SK-N-SH (cell line): ENCODE measurements at regions of chr3 and their contacts with region 1.

Region 1: DNA sequence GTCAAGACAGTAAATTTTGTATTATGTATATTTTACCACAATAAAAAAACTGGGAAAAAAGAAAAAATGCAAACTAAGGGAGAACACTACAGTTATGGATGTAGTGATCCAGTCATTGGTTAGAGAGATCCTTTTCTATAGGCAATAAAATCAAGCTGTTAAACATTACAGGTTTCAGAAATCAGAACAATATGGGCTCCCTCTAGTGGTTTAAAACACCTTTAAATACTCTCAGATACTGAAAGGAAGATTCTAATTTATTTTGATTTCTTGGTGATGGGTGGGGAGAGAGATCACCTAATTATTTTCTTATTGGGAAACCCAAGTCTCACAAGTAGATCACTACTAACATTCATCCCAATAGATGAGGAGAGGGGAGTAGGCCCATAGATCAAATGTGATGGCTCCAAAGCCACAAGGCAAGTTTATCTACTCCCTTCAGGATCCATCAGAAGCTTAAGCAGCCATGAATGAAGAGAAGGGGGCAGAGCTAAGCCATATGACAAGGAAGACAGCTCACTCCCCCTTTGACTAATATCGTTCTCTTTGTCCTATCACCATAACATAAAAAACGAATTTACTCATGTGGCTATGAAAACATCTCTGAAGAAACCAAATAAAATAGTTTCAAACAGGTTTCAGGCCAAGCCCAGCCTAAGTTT is 118.6 kb downstream of the ANO10 start:
- DNase-seq: peak; percentile 23
- H3K4me3 ChIP-seq: no peak overlapping the region
- H3K27ac ChIP-seq: no peak overlapping the region
- H3K4me1 ChIP-seq: no peaks in the 10 kb centered on the region; a peak in 1 of 4 replicates
- H3K27me3 ChIP-seq: no peaks in the 10 kb centered on the region
- CTCF ChIP-seq: peak; percentile 74
- EP300 ChIP-seq: no peak
- RAD21 ChIP-seq: peak; percentile 76

Region 2: GRCh38 chr3:43162230-43163084 is 340.7 kb before region 1 on chr3:
- CTCF ChIA-PET with region 1: interaction called, 55 read pairs
- POLR2A ChIA-PET with region 1: no interaction called
- DNase-seq: peak; percentile 47
- H3K4me3 ChIP-seq: no peak overlapping the region; a peak in 1 of 4 replicates
- H3K27ac ChIP-seq: no peak overlapping the region
- H3K4me1 ChIP-seq: peaks cover 0 to 6% of the 10 kb centered on the region in 2 experiments; a peak in 1 of 4 replicates
- H3K27me3 ChIP-seq: peaks cover 6% of the 10 kb centered on the region; the same call in 1 of the 2 replicates
- CTCF ChIP-seq: peak; percentile 46
- EP300 ChIP-seq: no peak
- RAD21 ChIP-seq: peak; percentile 88

Region 3: DNA sequence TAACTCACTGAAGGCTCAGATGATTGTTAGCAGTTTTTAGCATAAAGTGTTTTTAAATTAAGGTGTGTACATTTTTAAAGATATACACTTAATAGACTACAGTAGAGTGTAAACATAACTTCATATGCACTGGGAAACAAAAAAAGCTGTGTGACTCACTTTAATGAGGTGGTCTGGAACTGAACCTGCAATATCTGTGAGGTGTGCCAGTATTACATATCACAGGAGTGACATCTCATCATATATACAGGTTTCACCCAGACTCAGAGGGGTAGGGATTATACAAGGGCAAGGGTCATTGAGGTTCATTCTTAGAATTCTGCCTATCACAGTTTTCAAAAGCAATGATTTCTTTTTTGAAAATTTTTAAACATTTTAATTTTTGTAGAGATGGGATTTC is 224.1 kb before region 1 on chr3:
- CTCF ChIA-PET with region 1: no interaction called
- POLR2A ChIA-PET with region 1: no interaction called
- DNase-seq: no peak
- H3K4me3 ChIP-seq: no peak overlapping the region
- H3K27ac ChIP-seq: no peak overlapping the region
- H3K4me1 ChIP-seq: no peaks in the 10 kb centered on the region
- H3K27me3 ChIP-seq: peaks cover 19% of the 10 kb centered on the region; the same call in 1 of the 2 replicates
- CTCF ChIP-seq: no peak
- EP300 ChIP-seq: no peak
- RAD21 ChIP-seq: no peak

Region 4: DNA sequence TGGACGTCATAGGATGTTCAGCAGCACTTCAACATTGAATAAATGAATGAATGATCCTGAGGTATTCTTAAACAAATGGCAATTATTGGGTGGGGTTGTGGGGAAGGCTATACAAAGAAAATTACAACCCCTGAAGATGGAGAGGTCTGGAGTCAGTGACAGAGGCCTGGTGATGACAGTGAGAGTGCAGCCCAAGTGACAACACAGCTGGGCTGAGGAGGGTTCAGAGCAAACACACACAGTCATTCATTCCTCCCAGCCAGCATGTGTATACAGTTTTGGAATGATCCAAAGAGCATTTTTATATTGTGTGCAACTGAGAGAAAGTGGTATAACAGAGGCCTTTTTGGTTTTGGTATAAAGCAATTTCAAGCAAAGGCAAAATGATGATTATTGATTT is 29.5 kb before region 1 on chr3:
- CTCF ChIA-PET with region 1: interaction called, 11 read pairs
- POLR2A ChIA-PET with region 1: no interaction called
- DNase-seq: no peak
- H3K4me3 ChIP-seq: no peak overlapping the region
- H3K27ac ChIP-seq: no peak overlapping the region
- H3K4me1 ChIP-seq: no peaks in the 10 kb centered on the region; a peak in 1 of 4 replicates
- H3K27me3 ChIP-seq: no peaks in the 10 kb centered on the region
- CTCF ChIP-seq: no peak
- EP300 ChIP-seq: no peak
- RAD21 ChIP-seq: no peak

Region 5: DNA sequence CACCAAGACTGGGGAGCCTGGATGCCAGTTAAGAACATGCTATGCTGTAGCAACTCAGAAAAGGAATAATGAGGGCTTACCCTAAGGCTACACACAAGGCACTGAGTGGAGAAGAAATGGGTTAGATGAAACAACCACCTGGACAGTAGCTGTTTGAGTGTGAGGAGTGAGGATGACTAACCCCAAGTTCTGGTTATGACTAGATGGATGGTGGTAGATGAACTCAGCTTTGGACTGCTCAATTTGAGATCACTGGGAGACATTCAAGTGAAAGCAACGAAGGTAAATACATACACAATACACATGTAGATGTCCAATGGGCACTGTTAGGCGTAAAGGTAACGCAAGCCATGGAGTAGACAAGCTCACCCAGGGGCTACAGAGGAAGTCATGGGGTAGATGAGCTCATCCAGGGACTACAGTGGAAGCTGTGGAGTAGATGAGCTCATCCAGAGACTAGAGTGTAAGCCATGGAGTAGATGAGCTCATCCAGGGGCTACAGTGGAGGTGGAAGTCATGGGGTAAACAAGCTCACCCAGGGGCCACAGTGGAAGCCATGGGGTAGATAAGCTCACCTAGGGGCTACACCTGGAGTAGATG is 20.4 kb after region 1 on chr3:
- CTCF ChIA-PET with region 1: interaction called, 13 read pairs
- POLR2A ChIA-PET with region 1: no interaction called
- DNase-seq: no peak
- H3K4me3 ChIP-seq: no peak overlapping the region
- H3K27ac ChIP-seq: no peak overlapping the region
- H3K4me1 ChIP-seq: no peaks in the 10 kb centered on the region
- H3K27me3 ChIP-seq: no peaks in the 10 kb centered on the region
- CTCF ChIP-seq: no peak
- EP300 ChIP-seq: no peak
- RAD21 ChIP-seq: no peak